H1 (cell line): ENCODE measurements at regions of chr11 and their contacts with region 1.

Region 1: DNA sequence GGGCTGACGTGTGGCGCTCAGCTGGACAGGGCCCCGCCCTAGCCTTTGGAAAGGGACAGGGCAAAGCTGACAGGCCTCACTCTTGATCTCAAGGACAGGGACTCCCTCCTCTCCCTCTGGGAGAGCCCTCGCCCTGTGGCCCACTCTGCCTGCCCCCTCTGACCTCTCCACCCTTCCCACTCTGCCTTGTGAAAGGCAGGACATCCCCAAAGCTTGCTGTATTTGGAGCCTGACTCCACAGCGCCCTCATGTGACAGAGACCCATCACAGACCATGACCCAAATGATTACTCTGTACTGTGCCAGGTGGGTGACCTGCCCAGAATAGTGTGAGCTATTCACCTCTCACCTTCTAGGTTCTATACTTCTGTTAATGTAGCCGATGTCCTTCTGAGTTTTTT is 18.8 kb downstream of the P2RY2 start:
- DNase-seq: peak in 1 of 2 experiments; percentile 87
- H3K4me3 ChIP-seq: no peak overlapping the region
- H3K27ac ChIP-seq: no peak overlapping the region
- H3K4me1 ChIP-seq: peaks cover 0 to 4% (median 3%) of the 10 kb centered on the region in 4 experiments; a peak in 3 of 7 replicates
- H3K27me3 ChIP-seq: no peaks in the 10 kb centered on the region
- CTCF ChIP-seq: peak; percentile 90 to 93 (median 91)
- EP300 ChIP-seq: no peak
- POLR2A ChIP-seq: no peak
- RAD21 ChIP-seq: peak; percentile 89 to 91

Region 2: GRCh38 chr11:73218106-73218829 is 18.6 kb before region 1 on chr11 and contains the start of gene P2RY2:
- CTCF ChIA-PET with region 1: interaction called, 50 read pairs
- POLR2A ChIA-PET with region 1: no interaction called
- DNase-seq: peak; percentile 15 to 91
- H3K4me3 ChIP-seq: peak within 1 kb of the TSS; percentile 58 to 69 (median 64)
- H3K27ac ChIP-seq: no peak within 1 kb of the TSS
- H3K4me1 ChIP-seq: peaks cover 0 to 5% (median 2%) of the 10 kb centered on the region in 4 experiments; a peak in 5 of 7 replicates
- H3K27me3 ChIP-seq: peaks cover 2 to 35% (median 31%) of the 10 kb centered on the region in 4 experiments
- CTCF ChIP-seq: peak; percentile 47 to 70 (median 64)
- EP300 ChIP-seq: no peak
- POLR2A ChIP-seq: no peak
- RAD21 ChIP-seq: peak; percentile 22 to 27; a peak in 2 of 4 replicates
- total RNA-seq, gene P2RY2: 1.0 and 1.2 TPM in 2 replicates

Region 3: DNA sequence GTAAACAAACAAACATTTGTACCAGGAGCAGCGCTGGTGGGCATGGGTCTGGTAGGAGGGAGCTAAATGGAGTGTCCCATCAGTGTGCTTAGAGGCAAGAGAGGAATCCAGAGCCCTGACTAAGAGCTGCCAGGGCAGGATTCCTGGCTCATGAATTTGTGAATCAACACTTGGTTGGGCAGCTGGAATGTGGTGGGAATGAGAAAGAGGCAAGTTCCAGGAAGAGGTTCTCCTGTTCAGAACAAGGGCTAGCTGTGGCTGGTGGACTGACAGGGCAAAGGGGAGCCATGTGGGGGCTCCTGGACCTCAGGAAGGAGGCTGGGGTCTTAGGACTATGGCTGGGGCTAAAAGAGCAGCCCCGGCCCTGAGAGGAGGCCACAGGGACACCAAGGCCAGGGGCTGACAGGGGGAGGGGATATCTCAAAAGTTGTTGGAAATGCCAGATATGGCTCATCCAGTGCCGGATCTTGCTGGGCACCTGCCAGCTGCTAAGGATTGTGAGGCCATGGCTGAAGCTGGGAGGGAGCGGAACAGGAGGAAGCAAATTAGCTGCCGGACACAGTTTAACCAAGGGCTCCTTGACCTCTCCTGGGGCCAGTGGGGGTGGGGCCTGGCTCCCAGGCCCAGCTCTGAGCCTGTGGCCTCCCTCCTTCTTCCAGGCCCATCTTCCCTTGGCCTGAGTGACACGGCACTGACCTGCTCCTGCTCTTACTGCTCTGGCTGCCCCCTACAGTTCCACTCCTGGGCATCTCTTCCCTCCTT is 20.7 kb after region 1 on chr11:
- CTCF ChIA-PET with region 1: interaction called, 132 read pairs
- POLR2A ChIA-PET with region 1: interaction called, 3 read pairs
- DNase-seq: no peak
- H3K4me3 ChIP-seq: no peak overlapping the region
- H3K27ac ChIP-seq: no peak overlapping the region
- H3K4me1 ChIP-seq: peaks cover 0 to 3% (median 1%) of the 10 kb centered on the region in 4 experiments; a peak in 1 of 7 replicates
- H3K27me3 ChIP-seq: peaks cover 0 to 2% (median 0%) of the 10 kb centered on the region in 4 experiments; a peak in 1 of 7 replicates
- CTCF ChIP-seq: no peak
- EP300 ChIP-seq: no peak
- POLR2A ChIP-seq: no peak
- RAD21 ChIP-seq: no peak

Region 4: GRCh38 chr11:73262851-73263495 is 26.1 kb after region 1 on chr11:
- CTCF ChIA-PET with region 1: interaction called, 132 read pairs
- POLR2A ChIA-PET with region 1: no interaction called
- DNase-seq: no peak
- H3K4me3 ChIP-seq: no peak overlapping the region
- H3K27ac ChIP-seq: no peak overlapping the region
- H3K4me1 ChIP-seq: peaks cover 0 to 5% (median 0%) of the 10 kb centered on the region in 4 experiments; a peak in 2 of 7 replicates
- H3K27me3 ChIP-seq: peaks cover 0 to 13% (median 13%) of the 10 kb centered on the region in 4 experiments; a peak in 5 of 7 replicates
- CTCF ChIP-seq: no peak
- EP300 ChIP-seq: no peak
- POLR2A ChIP-seq: no peak
- RAD21 ChIP-seq: no peak

Region 5: GRCh38 chr11:73271936-73272719 is 35.3 kb after region 1 on chr11 and contains the start of gene P2RY6:
- CTCF ChIA-PET with region 1: interaction called, 132 read pairs
- POLR2A ChIA-PET with region 1: no interaction called
- DNase-seq: no peak
- H3K4me3 ChIP-seq: no peak within 1 kb of the TSS
- H3K27ac ChIP-seq: no peak within 1 kb of the TSS
- H3K4me1 ChIP-seq: peaks cover 0 to 15% (median 9%) of the 10 kb centered on the region in 4 experiments; a peak in 5 of 7 replicates
- H3K27me3 ChIP-seq: no peaks in the 10 kb centered on the region; a peak in 3 of 7 replicates
- CTCF ChIP-seq: no peak
- EP300 ChIP-seq: no peak
- POLR2A ChIP-seq: no peak
- RAD21 ChIP-seq: no peak
- total RNA-seq, gene P2RY6: not detected in 2 replicates